ENCODE measurements at regions of chr15 and their contacts with region 1.

Region 1: GRCh38 chr15:72285927-72286516 is 13.7 kb upstream of the PARP6 start:
- DNase-seq: no peak
- CTCF ChIP-seq: peak; percentile 34

Region 2: GRCh38 chr15:72179959-72180823 is 105.8 kb before region 1 on chr15:
- CTCF ChIA-PET with region 1: no interaction called
- POLR2A ChIA-PET with region 1: no interaction called
- DNase-seq: no peak
- CTCF ChIP-seq: no peak

Region 3: GRCh38 chr15:72199711-72200212 is 86.3 kb before region 1 on chr15:
- CTCF ChIA-PET with region 1: interaction called, 31 read pairs
- POLR2A ChIA-PET with region 1: no interaction called
- DNase-seq: peak; percentile 79
- CTCF ChIP-seq: peak; percentile 96

Region 4: GRCh38 chr15:72249142-72249810 is 36.7 kb before region 1 on chr15:
- CTCF ChIA-PET with region 1: no interaction called
- POLR2A ChIA-PET with region 1: no interaction called
- DNase-seq: no peak
- CTCF ChIP-seq: no peak

Region 5: GRCh38 chr15:72272213-72273002 is 13.6 kb before region 1 on chr15 and contains the start of gene PARP6:
- CTCF ChIA-PET with region 1: interaction called, 32 read pairs
- POLR2A ChIA-PET with region 1: no interaction called
- DNase-seq: peak; percentile 98
- CTCF ChIP-seq: peak; percentile 74

Region 6: GRCh38 chr15:72375847-72376581 is 90.0 kb after region 1 on chr15 and contains the start of gene HEXA:
- CTCF ChIA-PET with region 1: no interaction called
- POLR2A ChIA-PET with region 1: no interaction called
- DNase-seq: peak; percentile 97
- CTCF ChIP-seq: no peak

Region 7: GRCh38 chr15:72397796-72398588 is 112.0 kb after region 1 on chr15 and contains the start of gene TMEM202:
- CTCF ChIA-PET with region 1: no interaction called
- POLR2A ChIA-PET with region 1: no interaction called
- DNase-seq: no peak
- CTCF ChIP-seq: no peak

Measured in GM10248 (cell line).